ENCODE measurements at regions of chr4 and their contacts with region 1.

Region 1: GRCh38 chr4:100895556-100896197 is 377.9 kb upstream of the EMCN start:
- DNase-seq: peak; percentile 4
- H3K4me3 ChIP-seq: peak overlapping the region; percentile 15
- H3K27ac ChIP-seq: no peak overlapping the region
- H3K4me1 ChIP-seq: no peaks in the 10 kb centered on the region
- CTCF ChIP-seq: no peak

Region 2: DNA sequence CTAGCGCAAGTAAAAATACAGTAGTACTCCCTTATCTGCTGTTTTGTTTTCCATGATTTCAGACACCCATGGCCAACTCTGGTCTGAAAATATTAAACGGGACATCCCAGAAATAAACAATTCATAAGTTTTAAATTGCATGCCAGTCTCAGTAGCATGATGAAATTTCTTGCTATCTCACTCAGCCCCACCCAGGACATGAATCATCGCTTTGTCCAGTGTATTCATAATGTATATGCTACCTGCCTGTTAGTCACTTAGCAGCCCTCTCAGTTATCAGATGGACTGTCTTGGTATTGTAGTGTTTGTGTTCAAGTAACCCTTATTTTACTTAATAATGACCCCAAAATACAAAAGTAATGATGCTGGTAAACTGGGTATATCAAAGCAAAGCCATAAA is 547.2 kb before region 1 on chr4:
- CTCF ChIA-PET with region 1: no interaction called
- POLR2A ChIA-PET with region 1: no interaction called
- intact Hi-C with region 1: no loop called
- DNase-seq: no peak
- H3K4me3 ChIP-seq: no peak overlapping the region
- H3K27ac ChIP-seq: no peak overlapping the region
- H3K4me1 ChIP-seq: no peaks in the 10 kb centered on the region
- CTCF ChIP-seq: no peak

Region 3: GRCh38 chr4:100657187-100657586 is 238.5 kb before region 1 on chr4:
- CTCF ChIA-PET with region 1: no interaction called
- POLR2A ChIA-PET with region 1: no interaction called
- intact Hi-C with region 1: no loop called
- DNase-seq: no peak
- H3K4me3 ChIP-seq: no peak overlapping the region
- H3K27ac ChIP-seq: no peak overlapping the region
- H3K4me1 ChIP-seq: no peaks in the 10 kb centered on the region
- CTCF ChIP-seq: no peak

Region 4: DNA sequence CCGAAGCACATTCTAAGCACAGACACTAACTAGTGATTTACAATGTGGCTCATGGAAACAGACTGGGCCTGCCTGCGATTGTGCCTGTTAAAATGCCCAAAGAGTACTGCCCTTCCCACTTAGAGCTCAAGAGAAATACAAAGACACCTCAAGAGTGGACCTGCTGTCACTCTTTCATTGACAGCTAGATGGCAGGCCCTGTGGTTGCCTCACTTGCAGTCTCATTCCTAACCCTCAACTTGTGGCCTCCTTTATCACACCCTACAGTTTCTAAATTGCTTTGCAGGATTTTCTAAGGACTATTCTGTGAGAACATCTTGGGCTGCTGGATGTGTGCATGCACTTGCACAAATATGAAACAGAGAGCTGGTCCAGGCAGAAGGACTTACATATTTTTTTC is 46.8 kb before region 1 on chr4:
- CTCF ChIA-PET with region 1: no interaction called
- POLR2A ChIA-PET with region 1: no interaction called
- intact Hi-C with region 1: no loop called
- DNase-seq: peak; percentile 4
- H3K4me3 ChIP-seq: no peak overlapping the region
- H3K27ac ChIP-seq: no peak overlapping the region
- H3K4me1 ChIP-seq: no peaks in the 10 kb centered on the region
- CTCF ChIP-seq: peak; percentile 43; the same call in 1 of the 2 replicates

Region 5: GRCh38 chr4:101306225-101306624 is 410.5 kb after region 1 on chr4:
- CTCF ChIA-PET with region 1: no interaction called
- POLR2A ChIA-PET with region 1: interaction called, 10 read pairs
- intact Hi-C with region 1: no loop called
- DNase-seq: no peak
- H3K4me3 ChIP-seq: no peak overlapping the region
- H3K27ac ChIP-seq: no peak overlapping the region
- H3K4me1 ChIP-seq: no peaks in the 10 kb centered on the region
- CTCF ChIP-seq: no peak